Activated CD8-positive, alpha-beta T cell treated with anti-CD3 and anti-CD28 coated beads for 36 hours (primary cell): ENCODE measurements at regions of chr17 and their contacts with region 1.

Region 1: DNA sequence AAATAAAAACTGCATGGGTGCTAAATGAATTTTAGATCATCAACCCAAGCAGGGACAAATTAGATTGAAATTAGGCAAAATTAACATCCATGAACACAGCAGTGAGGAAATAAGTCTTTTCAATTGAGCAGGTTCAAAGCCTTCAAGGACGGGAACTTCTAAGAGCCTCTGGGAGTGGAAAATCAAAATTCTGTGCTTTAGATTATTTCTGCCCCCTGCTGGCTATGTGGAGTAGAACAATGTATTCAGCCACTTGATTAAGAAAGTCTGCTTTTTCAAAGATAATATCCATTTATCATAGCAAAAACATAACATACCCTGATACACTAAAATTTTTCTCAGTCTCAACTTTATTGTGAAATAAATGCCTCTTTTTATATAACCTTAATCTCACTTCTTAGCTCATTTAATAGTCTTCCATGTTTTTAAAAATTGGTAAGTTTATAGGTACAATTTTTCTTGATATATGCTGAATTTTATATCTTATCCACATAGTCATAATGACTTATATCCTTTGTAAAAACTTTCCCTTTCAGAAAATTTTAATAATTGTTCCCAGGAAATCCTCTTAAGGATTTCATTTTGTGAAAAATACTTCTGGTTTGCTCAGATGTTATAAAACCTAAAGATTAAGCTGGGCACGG is 28.1 kb upstream of the NOL11 start:
- DNase-seq: peak; percentile 66
- ATAC-seq: no peak
- H3K4me3 Mint-ChIP-seq: no peak overlapping the region
- H3K27ac Mint-ChIP-seq: no peak overlapping the region
- H3K4me1 Mint-ChIP-seq: peaks cover 8% of the 10 kb centered on the region
- H3K27me3 Mint-ChIP-seq: no peaks in the 10 kb centered on the region
- CTCF ChIP-seq: peak; percentile 81

Region 2: GRCh38 chr17:67636834-67637499 is 52.7 kb before region 1 on chr17:
- CTCF ChIA-PET with region 1: no interaction called
- POLR2A ChIA-PET with region 1: no interaction called
- intact Hi-C with region 1: no loop called
- DNase-seq: no peak
- ATAC-seq: no peak
- H3K4me3 Mint-ChIP-seq: no peak overlapping the region
- H3K27ac Mint-ChIP-seq: peak overlapping the region; percentile 25
- H3K4me1 Mint-ChIP-seq: peaks cover 2% of the 10 kb centered on the region
- H3K27me3 Mint-ChIP-seq: no peaks in the 10 kb centered on the region
- CTCF ChIP-seq: no peak

Region 3: DNA sequence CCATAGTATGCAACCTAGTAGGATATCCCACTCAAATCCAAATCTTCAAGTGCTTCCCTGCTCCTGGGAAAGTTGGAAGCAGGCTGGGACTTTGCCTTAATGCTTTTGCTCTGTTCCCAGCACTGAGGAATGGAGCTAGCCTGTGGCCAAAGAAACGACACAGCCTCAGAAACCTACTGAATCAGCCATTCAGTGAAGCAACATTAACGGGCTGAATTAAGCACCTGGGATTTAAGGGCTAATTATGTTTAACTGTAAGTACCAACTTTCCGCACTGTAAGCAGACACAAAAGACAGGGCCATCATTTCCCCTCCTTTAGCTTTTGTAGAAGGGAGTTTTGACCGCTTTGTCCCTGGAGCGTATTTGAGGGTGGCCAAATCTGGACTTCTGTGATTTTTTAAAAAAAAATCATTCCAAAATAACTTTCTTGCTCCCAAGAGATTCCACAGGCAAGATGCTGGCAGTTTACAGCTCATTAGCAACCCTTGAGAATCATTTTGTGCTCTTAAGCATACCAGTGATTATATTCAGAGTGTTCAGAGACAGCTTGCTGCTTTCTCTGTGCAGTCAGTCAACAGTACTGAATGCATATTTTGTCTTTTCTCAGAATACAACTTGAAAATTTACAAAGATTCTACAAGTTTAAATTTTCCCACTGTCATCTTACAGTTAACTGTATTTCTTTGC is 10.5 kb after region 1 on chr17:
- CTCF ChIA-PET with region 1: interaction called, 16 read pairs
- POLR2A ChIA-PET with region 1: no interaction called
- intact Hi-C with region 1: no loop called
- DNase-seq: no peak
- ATAC-seq: no peak
- H3K4me3 Mint-ChIP-seq: no peak overlapping the region
- H3K27ac Mint-ChIP-seq: no peak overlapping the region
- H3K4me1 Mint-ChIP-seq: peaks cover 2% of the 10 kb centered on the region
- H3K27me3 Mint-ChIP-seq: no peaks in the 10 kb centered on the region
- CTCF ChIP-seq: no peak